H1 (cell line): ENCODE measurements at regions of chr11 and their contacts with region 1.

Region 1: GRCh38 chr11:46346886-46347636 is at the start of gene DGKZ:
- DNase-seq: peak in 1 of 2 experiments; percentile 98
- H3K4me3 ChIP-seq: peak within 1 kb of the TSS; percentile 71 to 83 (median 77)
- H3K27ac ChIP-seq: no peak within 1 kb of the TSS
- H3K4me1 ChIP-seq: peaks cover 26 to 47% (median 33%) of the 10 kb centered on the region in 4 experiments
- H3K27me3 ChIP-seq: peaks cover 0 to 7% (median 3%) of the 10 kb centered on the region in 4 experiments; a peak in 1 of 7 replicates
- CTCF ChIP-seq: peak; percentile 90 to 96 (median 94)
- EP300 ChIP-seq: no peak
- POLR2A ChIP-seq: peak in 1 of 2 experiments; percentile 43; a peak in 1 of 3 replicates
- RAD21 ChIP-seq: peak; percentile 31 to 66; a peak in 3 of 4 replicates
- total RNA-seq, gene DGKZ: 84.4 and 88.5 TPM in 2 replicates

Region 2: DNA sequence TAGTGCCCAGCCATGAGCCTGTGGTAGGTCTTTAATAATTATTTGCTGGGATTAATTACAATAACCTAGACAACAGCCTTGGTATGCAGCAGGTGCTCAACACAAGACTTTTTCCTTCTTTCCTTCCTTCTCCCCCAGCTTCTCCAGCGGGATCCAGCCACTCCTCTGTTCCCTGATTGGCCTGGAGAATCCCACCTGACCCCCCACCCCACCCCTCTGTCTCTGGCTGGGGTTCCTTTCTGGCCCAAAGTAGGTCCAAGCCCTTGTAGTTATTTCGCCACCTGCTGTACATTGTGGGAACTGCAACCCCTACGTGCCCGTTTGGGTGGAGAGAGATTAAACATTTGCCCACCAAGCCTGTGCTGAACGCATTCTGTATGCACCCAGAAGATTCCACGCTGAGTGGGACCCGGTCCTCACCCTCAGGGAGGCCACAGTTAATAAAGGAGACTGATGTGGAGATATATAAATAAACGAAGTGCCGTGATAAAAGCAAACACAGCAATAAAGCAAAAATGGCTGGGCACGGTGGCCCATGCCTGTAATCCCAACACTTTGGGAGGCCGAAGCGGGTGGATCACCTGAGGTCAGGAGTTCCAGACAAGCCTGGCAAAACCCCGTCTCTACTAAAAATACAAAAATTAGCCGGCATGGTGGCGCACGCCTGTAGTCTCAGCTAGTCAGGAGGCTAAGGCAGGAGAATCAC is 31.9 kb before region 1 on chr11:
- CTCF ChIA-PET with region 1: interaction called, 107 read pairs
- POLR2A ChIA-PET with region 1: interaction called, 3 read pairs
- DNase-seq: peak; percentile 77 to 95
- H3K4me3 ChIP-seq: no peak overlapping the region
- H3K27ac ChIP-seq: no peak overlapping the region
- H3K4me1 ChIP-seq: no peaks in the 10 kb centered on the region
- H3K27me3 ChIP-seq: no peaks in the 10 kb centered on the region
- CTCF ChIP-seq: peak; percentile 84 to 93 (median 84)
- EP300 ChIP-seq: no peak
- POLR2A ChIP-seq: no peak
- RAD21 ChIP-seq: peak; percentile 79 to 83

Region 3: GRCh38 chr11:46332568-46333393 is 14.3 kb before region 1 on chr11:
- CTCF ChIA-PET with region 1: interaction called, 1,004 read pairs
- POLR2A ChIA-PET with region 1: interaction called, 21 read pairs
- DNase-seq: peak in 1 of 2 experiments; percentile 72
- H3K4me3 ChIP-seq: peak overlapping the region; percentile 44 to 62 (median 55)
- H3K27ac ChIP-seq: no peak overlapping the region
- H3K4me1 ChIP-seq: peaks cover 5 to 46% (median 31%) of the 10 kb centered on the region in 4 experiments
- H3K27me3 ChIP-seq: peaks cover 14 to 44% (median 39%) of the 10 kb centered on the region in 4 experiments
- CTCF ChIP-seq: 0 out of 4 replicates have a peak, but pooled peaks of 1 of the 3 experiments have one; percentile 4
- EP300 ChIP-seq: no peak
- POLR2A ChIP-seq: no peak
- RAD21 ChIP-seq: no peak

Region 4: DNA sequence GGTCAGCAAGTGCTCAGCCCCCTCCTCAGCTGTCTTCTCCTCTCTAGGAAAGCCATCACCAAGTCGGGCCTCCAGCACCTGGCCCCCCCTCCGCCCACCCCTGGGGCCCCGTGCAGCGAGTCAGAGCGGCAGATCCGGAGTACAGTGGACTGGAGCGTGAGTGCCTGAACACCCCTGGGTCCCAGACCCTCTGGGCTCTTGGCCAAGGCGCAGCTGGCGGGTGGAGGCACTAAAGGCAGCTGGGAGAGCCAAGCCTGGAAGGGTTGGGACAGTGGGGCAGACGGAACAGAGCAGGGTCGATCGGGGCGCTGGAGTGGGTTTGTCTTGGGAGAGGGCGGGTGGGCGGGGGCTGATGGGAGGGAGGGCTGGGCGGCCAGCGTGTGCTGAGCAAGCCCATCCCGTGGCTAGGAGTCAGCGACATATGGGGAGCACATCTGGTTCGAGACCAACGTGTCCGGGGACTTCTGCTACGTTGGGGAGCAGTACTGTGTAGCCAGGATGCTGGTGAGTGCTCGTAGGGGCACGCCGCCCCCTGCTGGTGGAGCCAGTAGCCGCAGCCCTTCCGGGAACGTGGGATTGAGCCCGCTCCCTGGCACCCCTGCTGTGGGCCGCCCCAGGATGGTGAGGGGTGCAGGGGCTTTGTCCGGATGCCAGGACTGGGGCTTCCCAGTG is 20.3 kb after region 1 on chr11:
- CTCF ChIA-PET with region 1: interaction called, 1,004 read pairs
- POLR2A ChIA-PET with region 1: interaction called, 69 read pairs
- DNase-seq: peak in 1 of 2 experiments; percentile 95
- H3K4me3 ChIP-seq: no peak overlapping the region
- H3K27ac ChIP-seq: no peak overlapping the region; the same call in 1 of the 2 replicates
- H3K4me1 ChIP-seq: peaks cover 0 to 17% (median 8%) of the 10 kb centered on the region in 4 experiments; a peak in 5 of 7 replicates
- H3K27me3 ChIP-seq: no peaks in the 10 kb centered on the region
- CTCF ChIP-seq: peak in 2 of 3 experiments; percentile 75 to 90; a peak in 3 of 4 replicates
- EP300 ChIP-seq: no peak
- POLR2A ChIP-seq: no peak
- RAD21 ChIP-seq: peak; percentile 64 to 72

Region 5: GRCh38 chr11:46380340-46381047 is 33.4 kb after region 1 on chr11:
- CTCF ChIA-PET with region 1: interaction called, 1,004 read pairs
- POLR2A ChIA-PET with region 1: interaction called, 10 read pairs
- DNase-seq: peak in 1 of 2 experiments; percentile 92
- H3K4me3 ChIP-seq: peak overlapping the region; percentile 63 to 95 (median 69)
- H3K27ac ChIP-seq: peak overlapping the region; percentile 53
- H3K4me1 ChIP-seq: peaks cover 0 to 16% (median 13%) of the 10 kb centered on the region in 4 experiments; a peak in 6 of 7 replicates
- H3K27me3 ChIP-seq: no peaks in the 10 kb centered on the region
- CTCF ChIP-seq: no peak
- EP300 ChIP-seq: peak in 1 of 2 experiments; percentile 25; a peak in 1 of 3 replicates
- POLR2A ChIP-seq: peak in 1 of 2 experiments; percentile 56; a peak in 2 of 3 replicates
- RAD21 ChIP-seq: no peak